ENCODE measurements at regions of chr6 and their contacts with region 1.

Region 1: GRCh38 chr6:158869826-158870648 is 50.9 kb upstream of the EZR start:
- DNase-seq: no peak
- ATAC-seq: no peak; the same call in 1 of the 2 replicates
- H3K4me3 Mint-ChIP-seq: peak overlapping the region; percentile 78
- H3K27ac Mint-ChIP-seq: peak overlapping the region; percentile 99
- H3K4me1 Mint-ChIP-seq: peaks cover 29% of the 10 kb centered on the region
- H3K27me3 Mint-ChIP-seq: peaks cover 23% of the 10 kb centered on the region
- CTCF ChIP-seq: no peak

Region 2: DNA sequence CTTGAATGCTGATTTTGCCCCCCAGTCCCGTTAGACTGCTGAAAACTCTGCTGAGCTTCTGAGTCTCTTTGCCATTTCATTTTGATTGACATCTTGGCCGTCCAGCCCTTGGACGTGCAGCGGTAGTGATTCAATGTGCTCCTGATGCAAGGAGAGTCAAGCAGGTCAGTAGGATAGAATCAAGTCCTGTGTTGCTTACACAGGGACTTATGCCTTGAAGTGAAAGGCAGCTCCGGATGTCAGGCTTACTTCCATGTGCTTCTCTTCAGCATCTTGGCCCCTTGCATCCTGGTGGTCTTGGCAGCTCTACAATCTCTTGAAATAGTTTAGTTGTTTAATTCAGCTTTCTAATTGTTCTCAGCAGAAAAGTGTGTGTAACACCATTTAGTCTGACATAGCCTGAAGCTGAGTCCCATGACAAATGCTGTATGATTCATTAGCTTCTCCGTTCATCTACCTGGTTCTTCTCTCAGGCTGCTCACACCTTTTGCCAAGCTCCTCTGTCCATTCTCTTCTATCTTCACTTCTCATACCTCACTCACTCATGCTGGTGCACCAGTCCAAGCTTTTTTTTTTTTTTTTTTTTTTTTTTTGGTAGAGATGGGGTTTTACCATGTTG is 126.9 kb before region 1 on chr6:
- CTCF ChIA-PET with region 1: no interaction called
- POLR2A ChIA-PET with region 1: interaction called, 10 read pairs
- DNase-seq: no peak
- ATAC-seq: no peak
- H3K4me3 Mint-ChIP-seq: no peak overlapping the region
- H3K27ac Mint-ChIP-seq: no peak overlapping the region
- H3K4me1 Mint-ChIP-seq: no peaks in the 10 kb centered on the region
- H3K27me3 Mint-ChIP-seq: peaks cover 4% of the 10 kb centered on the region; the same call in 1 of the 2 replicates
- CTCF ChIP-seq: no peak

Region 3: GRCh38 chr6:158819213-158819909 is 50.7 kb before region 1 on chr6 and contains the start of gene EZR:
- CTCF ChIA-PET with region 1: interaction called, 9 read pairs
- POLR2A ChIA-PET with region 1: interaction called, 20 read pairs
- DNase-seq: peak; percentile 86
- ATAC-seq: peak; percentile 70
- H3K4me3 Mint-ChIP-seq: peak within 1 kb of the TSS; percentile 95
- H3K27ac Mint-ChIP-seq: no peak within 1 kb of the TSS
- H3K4me1 Mint-ChIP-seq: peaks cover 38% of the 10 kb centered on the region
- H3K27me3 Mint-ChIP-seq: peaks cover 16% of the 10 kb centered on the region
- CTCF ChIP-seq: no peak
- total RNA-seq, gene EZR: 194 to 215 TPM (median 199 TPM) in 3 replicates

Region 4: DNA sequence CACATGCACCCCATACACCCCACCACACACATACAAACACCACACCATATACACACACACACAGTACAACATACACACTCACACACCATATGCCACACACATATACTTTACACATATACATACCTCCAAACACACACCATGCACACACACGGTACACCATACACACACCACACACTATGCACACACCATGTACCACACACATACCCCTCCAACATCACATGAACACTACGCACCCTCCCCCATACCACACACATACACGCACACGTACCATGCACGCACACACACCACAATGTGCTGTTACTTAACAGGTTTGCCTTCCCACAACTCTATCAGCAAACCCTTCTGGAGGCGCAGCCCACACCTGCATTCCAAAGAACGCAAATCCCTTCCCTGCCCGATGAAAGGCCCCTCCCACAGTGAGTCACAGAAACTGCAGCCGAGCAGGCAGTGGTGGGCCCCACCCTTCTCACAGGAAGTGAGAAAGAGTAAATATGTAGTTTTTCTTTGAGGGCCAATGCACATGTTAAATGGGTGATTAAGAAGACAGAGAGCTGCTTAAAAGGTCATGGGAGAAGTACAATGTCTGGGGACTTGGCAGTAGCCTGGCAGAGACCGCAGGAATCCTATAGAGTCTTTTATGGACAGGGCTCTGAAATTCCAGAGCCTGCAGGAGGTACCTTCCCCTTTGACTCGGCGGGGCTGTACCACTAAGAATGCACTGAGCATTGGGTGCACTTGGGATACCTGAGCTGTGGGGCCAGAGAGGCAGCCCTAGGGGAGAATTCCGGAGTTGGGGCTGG is 16.8 kb before region 1 on chr6:
- CTCF ChIA-PET with region 1: interaction called, 9 read pairs
- POLR2A ChIA-PET with region 1: interaction called, 40 read pairs
- DNase-seq: peak; percentile 91
- ATAC-seq: peak; percentile 89
- H3K4me3 Mint-ChIP-seq: no peak overlapping the region
- H3K27ac Mint-ChIP-seq: no peak overlapping the region
- H3K4me1 Mint-ChIP-seq: peaks cover 36% of the 10 kb centered on the region
- H3K27me3 Mint-ChIP-seq: no peaks in the 10 kb centered on the region
- CTCF ChIP-seq: no peak

Region 5: GRCh38 chr6:158910484-158911348 is 40.7 kb after region 1 on chr6:
- CTCF ChIA-PET with region 1: interaction called, 5 read pairs
- POLR2A ChIA-PET with region 1: interaction called, 12 read pairs
- DNase-seq: peak; percentile 70
- ATAC-seq: peak; percentile 93
- H3K4me3 Mint-ChIP-seq: peak overlapping the region; percentile 38
- H3K27ac Mint-ChIP-seq: peak overlapping the region; percentile 99
- H3K4me1 Mint-ChIP-seq: peaks cover 58% of the 10 kb centered on the region
- H3K27me3 Mint-ChIP-seq: no peaks in the 10 kb centered on the region; the same call in 1 of the 2 replicates
- CTCF ChIP-seq: no peak